ENCODE measurements at regions of chr16 and their contacts with region 1.

Region 1: GRCh38 chr16:57600048-57600835 is 28.2 kb upstream of the ADGRG1 start:
- DNase-seq: peak; percentile 70
- ATAC-seq: peak; percentile 99
- H3K4me3 ChIP-seq: no peak overlapping the region; a peak in 1 of 6 replicates
- H3K27ac ChIP-seq: no peak overlapping the region
- H3K4me1 ChIP-seq: peaks cover 9% of the 10 kb centered on the region; the same call in 1 of the 2 replicates
- H3K27me3 ChIP-seq: no peaks in the 10 kb centered on the region
- CTCF ChIP-seq: peak; percentile 100
- EP300 ChIP-seq: no peak
- POLR2A ChIP-seq: no peak
- RAD21 ChIP-seq: peak; percentile 98

Region 2: GRCh38 chr16:57535680-57536305 is 64.4 kb before region 1 on chr16:
- CTCF ChIA-PET with region 1: no interaction called
- POLR2A ChIA-PET with region 1: no interaction called
- in situ Hi-C with region 1: no loop called
- intact Hi-C with region 1: no loop called
- DNase-seq: peak; percentile 77
- ATAC-seq: peak; percentile 95
- H3K4me3 ChIP-seq: peak overlapping the region; percentile 69 to 82 (median 79)
- H3K27ac ChIP-seq: no peak overlapping the region
- H3K4me1 ChIP-seq: peaks cover 62% of the 10 kb centered on the region
- H3K27me3 ChIP-seq: peaks cover 1 to 39% of the 10 kb centered on the region in 2 experiments
- CTCF ChIP-seq: peak; percentile 38
- EP300 ChIP-seq: no peak
- POLR2A ChIP-seq: no peak
- RAD21 ChIP-seq: peak; percentile 7; the same call in 1 of the 2 replicates

Region 3: DNA sequence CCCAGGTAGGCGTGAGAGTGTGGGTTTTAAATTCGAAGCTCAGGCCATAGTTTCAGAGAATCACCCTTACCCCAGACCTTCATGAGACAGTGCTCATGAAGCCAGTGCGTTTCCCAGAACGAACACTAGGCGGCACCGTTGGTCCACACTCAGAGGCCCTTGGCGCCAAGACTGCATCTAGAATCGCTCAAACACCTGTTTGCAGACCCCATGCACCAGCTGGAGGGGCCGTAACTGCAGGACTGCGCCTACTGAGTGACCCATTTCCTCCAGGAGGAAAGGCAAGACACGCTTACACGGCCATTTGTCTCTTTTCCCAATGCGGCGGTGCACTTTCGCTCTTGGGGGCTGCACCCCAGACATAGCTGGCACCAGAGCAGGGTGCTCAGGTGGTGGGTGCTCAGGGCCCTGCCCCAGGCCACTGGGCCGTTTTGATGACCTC is 23.8 kb before region 1 on chr16:
- CTCF ChIA-PET with region 1: interaction called, 11 read pairs
- POLR2A ChIA-PET with region 1: no interaction called
- in situ Hi-C with region 1: no loop called
- intact Hi-C with region 1: no loop called
- DNase-seq: peak; percentile 59
- ATAC-seq: peak; percentile 90
- H3K4me3 ChIP-seq: no peak overlapping the region
- H3K27ac ChIP-seq: no peak overlapping the region
- H3K4me1 ChIP-seq: peaks cover 10% of the 10 kb centered on the region; the same call in 1 of the 2 replicates
- H3K27me3 ChIP-seq: no peaks in the 10 kb centered on the region
- CTCF ChIP-seq: peak; percentile 98
- EP300 ChIP-seq: no peak
- POLR2A ChIP-seq: no peak
- RAD21 ChIP-seq: peak; percentile 85

Region 4: GRCh38 chr16:57637424-57637823 is 37.2 kb after region 1 on chr16:
- CTCF ChIA-PET with region 1: no interaction called
- POLR2A ChIA-PET with region 1: interaction called, 10 read pairs
- in situ Hi-C with region 1: no loop called
- intact Hi-C with region 1: no loop called
- DNase-seq: no peak
- ATAC-seq: no peak
- H3K4me3 ChIP-seq: no peak overlapping the region
- H3K27ac ChIP-seq: no peak overlapping the region
- H3K4me1 ChIP-seq: peaks cover 81% of the 10 kb centered on the region
- H3K27me3 ChIP-seq: no peaks in the 10 kb centered on the region
- CTCF ChIP-seq: no peak
- EP300 ChIP-seq: no peak
- POLR2A ChIP-seq: no peak
- RAD21 ChIP-seq: no peak

Region 5: GRCh38 chr16:57725554-57726330 is 125.5 kb after region 1 on chr16:
- CTCF ChIA-PET with region 1: interaction called, 3 read pairs
- POLR2A ChIA-PET with region 1: no interaction called
- in situ Hi-C with region 1: loop called (anchors 5 kb)
- intact Hi-C with region 1: loop called (anchors 2 kb)
- DNase-seq: no peak
- ATAC-seq: no peak
- H3K4me3 ChIP-seq: no peak overlapping the region
- H3K27ac ChIP-seq: no peak overlapping the region
- H3K4me1 ChIP-seq: peaks cover 25% of the 10 kb centered on the region
- H3K27me3 ChIP-seq: no peaks in the 10 kb centered on the region
- CTCF ChIP-seq: no peak
- EP300 ChIP-seq: no peak
- POLR2A ChIP-seq: no peak
- RAD21 ChIP-seq: no peak

Region 6: GRCh38 chr16:57938936-57939871 is 339.0 kb after region 1 on chr16:
- CTCF ChIA-PET with region 1: no interaction called
- POLR2A ChIA-PET with region 1: no interaction called
- in situ Hi-C with region 1: no loop called
- intact Hi-C with region 1: no loop called
- DNase-seq: peak; percentile 22
- ATAC-seq: peak; percentile 83
- H3K4me3 ChIP-seq: no peak overlapping the region
- H3K27ac ChIP-seq: no peak overlapping the region
- H3K4me1 ChIP-seq: peaks cover 13% of the 10 kb centered on the region
- H3K27me3 ChIP-seq: peaks cover 0 to 41% of the 10 kb centered on the region in 2 experiments; a peak in 3 of 5 replicates
- CTCF ChIP-seq: peak; percentile 65
- EP300 ChIP-seq: no peak
- POLR2A ChIP-seq: no peak
- RAD21 ChIP-seq: no peak

Measured in HepG2 (cell line).